ENCODE measurements at regions of chr12 and their contacts with region 1.

Region 1: GRCh38 chr12:15200641-15201040 is 20.6 kb downstream of the RERG start:
- DNase-seq: no peak
- ATAC-seq: no peak
- H3K4me3 ChIP-seq: no peak overlapping the region
- H3K27ac ChIP-seq: no peak overlapping the region
- H3K4me1 ChIP-seq: no peaks in the 10 kb centered on the region
- H3K27me3 ChIP-seq: no peaks in the 10 kb centered on the region
- CTCF ChIP-seq: no peak
- EP300 ChIP-seq: no peak
- POLR2A ChIP-seq: no peak
- RAD21 ChIP-seq: no peak

Region 2: DNA sequence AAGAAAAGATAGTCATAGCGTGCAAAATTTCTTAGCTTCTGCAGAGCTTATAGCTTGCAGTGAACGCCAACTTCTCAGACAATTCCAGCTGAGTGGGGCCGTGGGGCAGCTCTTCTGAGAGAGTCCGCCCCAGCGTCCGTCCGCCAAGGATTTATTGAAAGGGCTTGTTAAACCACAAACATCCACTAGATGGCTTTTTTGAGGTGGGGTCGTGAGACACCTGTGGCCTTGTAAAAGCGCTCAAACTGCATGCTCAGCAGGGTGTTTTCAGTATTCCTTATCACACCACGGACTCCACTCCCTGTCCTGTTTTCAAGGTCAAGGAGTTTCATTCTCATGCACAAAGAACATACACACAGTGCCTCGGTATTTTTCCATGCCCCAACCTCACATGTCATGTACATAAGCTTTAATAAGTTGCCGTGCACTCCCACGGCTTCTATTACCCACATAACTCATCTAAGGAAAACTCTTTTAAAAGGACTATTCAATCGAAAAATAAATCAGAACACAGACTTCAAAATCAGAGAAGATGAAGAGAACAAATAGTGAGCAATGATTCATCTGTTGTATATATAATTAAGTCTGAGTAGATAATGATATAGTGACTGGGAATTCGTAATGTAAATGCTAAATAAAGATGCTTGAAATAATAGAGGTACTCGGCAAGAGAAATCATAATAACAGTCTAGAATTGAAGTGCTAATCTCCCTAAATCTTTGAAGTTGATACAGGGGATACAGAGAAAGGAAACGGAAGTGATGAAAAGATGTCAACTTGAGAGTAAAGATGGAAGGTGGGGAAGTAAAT is 444.1 kb before region 1 on chr12:
- CTCF ChIA-PET with region 1: no interaction called
- POLR2A ChIA-PET with region 1: no interaction called
- RAD21 ChIA-PET with region 1: no interaction called
- SMC1A ChIA-PET with region 1: no interaction called
- in situ Hi-C with region 1: no loop called
- intact Hi-C with region 1: no loop called
- DNase-seq: no peak
- ATAC-seq: no peak
- H3K4me3 ChIP-seq: no peak overlapping the region
- H3K27ac ChIP-seq: no peak overlapping the region
- H3K4me1 ChIP-seq: no peaks in the 10 kb centered on the region
- H3K27me3 ChIP-seq: no peaks in the 10 kb centered on the region
- CTCF ChIP-seq: peak in 2 of 3 experiments; percentile 6 to 16; a peak in 1 of 6 replicates
- EP300 ChIP-seq: no peak
- POLR2A ChIP-seq: no peak
- RAD21 ChIP-seq: no peak

Region 3: DNA sequence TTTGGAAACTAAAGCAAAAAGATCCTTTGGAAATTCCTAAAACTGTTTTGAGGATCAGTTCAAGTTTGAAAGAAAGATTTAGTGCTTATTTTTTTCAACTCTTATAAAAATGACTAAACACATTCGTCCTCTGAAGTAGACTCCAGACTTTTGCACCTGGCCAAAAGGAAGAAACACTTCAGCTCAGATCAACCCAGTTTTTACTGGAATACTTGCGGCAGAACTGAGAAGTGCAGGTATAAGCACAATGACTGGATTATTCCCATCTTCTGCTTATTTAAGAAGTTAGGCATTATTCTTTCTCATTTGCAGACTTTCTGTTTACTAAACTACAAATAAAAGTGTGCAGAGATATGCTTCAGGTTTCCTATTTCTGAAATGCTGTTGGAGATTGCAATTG is 185.9 kb before region 1 on chr12:
- CTCF ChIA-PET with region 1: no interaction called
- POLR2A ChIA-PET with region 1: no interaction called
- RAD21 ChIA-PET with region 1: no interaction called
- SMC1A ChIA-PET with region 1: no interaction called
- in situ Hi-C with region 1: no loop called
- intact Hi-C with region 1: loop called (anchors 5 kb)
- DNase-seq: no peak
- ATAC-seq: no peak
- H3K4me3 ChIP-seq: no peak overlapping the region
- H3K27ac ChIP-seq: no peak overlapping the region
- H3K4me1 ChIP-seq: peaks cover 6% of the 10 kb centered on the region
- H3K27me3 ChIP-seq: no peaks in the 10 kb centered on the region
- CTCF ChIP-seq: no peak
- EP300 ChIP-seq: no peak
- POLR2A ChIP-seq: no peak
- RAD21 ChIP-seq: no peak